Activated B cell treated with CpG ODN at 0.5 μM for 24 hours (primary cell): ENCODE measurements at regions of chr2 and their contacts with region 1.

Region 1: DNA sequence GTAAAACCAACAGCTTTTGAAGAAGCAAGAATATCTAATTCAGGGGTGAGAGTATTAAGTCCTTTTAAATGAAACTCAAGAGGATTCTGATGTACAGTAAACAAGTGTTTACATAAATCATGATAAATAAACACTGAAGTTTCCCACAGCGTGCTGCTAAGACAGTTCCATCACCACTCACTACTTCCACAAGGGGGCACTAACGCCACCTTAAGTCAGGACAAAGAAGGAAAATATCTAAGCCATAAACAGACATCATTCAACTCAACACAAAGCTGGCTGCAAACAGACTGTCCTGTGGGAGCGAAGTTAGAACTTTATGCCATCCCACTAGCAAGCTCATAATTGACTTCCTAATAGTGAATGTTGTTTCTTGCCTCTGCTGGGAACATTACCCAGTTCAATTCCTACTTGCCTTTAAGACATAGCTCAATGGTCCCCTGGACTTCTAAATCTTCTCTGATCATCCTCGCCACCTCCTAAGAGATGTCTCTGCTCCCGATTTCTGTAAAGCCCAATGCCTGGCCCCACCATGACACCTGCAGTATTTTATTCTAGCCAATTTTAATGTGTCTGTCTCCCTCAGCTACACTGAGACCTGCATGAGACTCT is 36.5 kb downstream of the MRPL44 start:
- DNase-seq: no peak
- ATAC-seq: peak; percentile 67
- H3K4me3 Mint-ChIP-seq: no peak overlapping the region
- H3K27ac Mint-ChIP-seq: no peak overlapping the region
- H3K4me1 Mint-ChIP-seq: no peaks in the 10 kb centered on the region
- H3K27me3 Mint-ChIP-seq: no peaks in the 10 kb centered on the region
- CTCF ChIP-seq: no peak

Region 2: GRCh38 chr2:222969491-222969890 is 1024.2 kb before region 1 on chr2:
- CTCF ChIA-PET with region 1: no interaction called
- POLR2A ChIA-PET with region 1: no interaction called
- intact Hi-C with region 1: loop called (anchors 5 kb)
- DNase-seq: no peak
- ATAC-seq: no peak
- H3K4me3 Mint-ChIP-seq: no peak overlapping the region
- H3K27ac Mint-ChIP-seq: no peak overlapping the region
- H3K4me1 Mint-ChIP-seq: no peaks in the 10 kb centered on the region
- H3K27me3 Mint-ChIP-seq: peaks cover 5% of the 10 kb centered on the region
- CTCF ChIP-seq: no peak

Region 3: GRCh38 chr2:223727562-223727961 is 266.2 kb before region 1 on chr2:
- CTCF ChIA-PET with region 1: no interaction called
- POLR2A ChIA-PET with region 1: no interaction called
- intact Hi-C with region 1: no loop called
- DNase-seq: no peak
- ATAC-seq: peak; percentile 65
- H3K4me3 Mint-ChIP-seq: no peak overlapping the region
- H3K27ac Mint-ChIP-seq: no peak overlapping the region
- H3K4me1 Mint-ChIP-seq: no peaks in the 10 kb centered on the region
- H3K27me3 Mint-ChIP-seq: no peaks in the 10 kb centered on the region
- CTCF ChIP-seq: peak; percentile 20

Region 4: DNA sequence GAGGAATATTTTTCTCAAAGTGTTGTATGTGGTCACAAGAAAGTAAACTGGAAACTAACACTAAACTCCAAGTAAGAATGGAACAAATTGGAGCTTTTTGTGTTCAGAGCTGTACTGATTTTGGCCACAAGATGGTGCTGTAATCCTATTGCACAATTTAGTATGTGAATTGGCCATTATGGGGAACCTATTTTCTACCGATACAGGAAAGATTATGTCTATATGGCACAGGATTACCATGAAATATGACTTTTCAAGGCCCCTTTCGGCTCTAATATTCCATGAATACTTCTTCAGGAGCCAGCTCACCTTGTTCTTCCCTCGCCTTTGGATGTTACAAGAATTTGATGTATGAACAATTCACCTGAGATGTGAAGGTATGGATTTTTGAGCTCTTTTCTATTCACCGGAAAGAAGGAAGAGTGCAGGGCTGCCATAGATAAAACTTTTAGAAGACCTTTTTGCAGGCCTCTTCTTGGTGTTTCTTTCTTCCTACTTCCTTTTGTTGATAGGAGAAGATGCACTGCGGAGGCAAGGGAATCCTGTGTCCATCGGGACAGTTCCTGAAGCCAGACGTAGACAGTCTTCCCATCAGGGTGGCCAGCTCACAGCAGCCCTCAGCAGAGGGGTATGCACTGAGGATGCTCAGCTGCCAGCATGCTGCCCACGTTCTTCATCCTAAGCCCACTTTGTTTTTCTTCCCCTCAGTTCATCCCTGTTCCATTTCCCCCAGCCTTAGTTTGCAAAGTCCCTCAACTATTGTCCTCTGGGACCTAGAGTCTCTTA is 23.2 kb before region 1 on chr2:
- CTCF ChIA-PET with region 1: interaction called, 41 read pairs
- POLR2A ChIA-PET with region 1: no interaction called
- intact Hi-C with region 1: loop called (anchors 1 kb)
- DNase-seq: no peak
- ATAC-seq: peak; percentile 64
- H3K4me3 Mint-ChIP-seq: no peak overlapping the region
- H3K27ac Mint-ChIP-seq: no peak overlapping the region
- H3K4me1 Mint-ChIP-seq: peaks cover 3% of the 10 kb centered on the region
- H3K27me3 Mint-ChIP-seq: no peaks in the 10 kb centered on the region
- CTCF ChIP-seq: peak; percentile 90

Region 5: GRCh38 chr2:224062481-224063297 is 69.0 kb after region 1 on chr2:
- CTCF ChIA-PET with region 1: interaction called, 12 read pairs
- POLR2A ChIA-PET with region 1: no interaction called
- intact Hi-C with region 1: loop called (anchors 1 kb)
- DNase-seq: no peak
- ATAC-seq: no peak
- H3K4me3 Mint-ChIP-seq: no peak overlapping the region
- H3K27ac Mint-ChIP-seq: no peak overlapping the region
- H3K4me1 Mint-ChIP-seq: peaks cover 2% of the 10 kb centered on the region
- H3K27me3 Mint-ChIP-seq: no peaks in the 10 kb centered on the region
- CTCF ChIP-seq: no peak

Region 6: GRCh38 chr2:224369028-224369632 is 375.4 kb after region 1 on chr2:
- CTCF ChIA-PET with region 1: no interaction called
- POLR2A ChIA-PET with region 1: no interaction called
- intact Hi-C with region 1: loop called (anchors 1 kb)
- DNase-seq: no peak
- ATAC-seq: no peak
- H3K4me3 Mint-ChIP-seq: no peak overlapping the region
- H3K27ac Mint-ChIP-seq: no peak overlapping the region
- H3K4me1 Mint-ChIP-seq: no peaks in the 10 kb centered on the region
- H3K27me3 Mint-ChIP-seq: no peaks in the 10 kb centered on the region
- CTCF ChIP-seq: peak; percentile 48

Region 7: GRCh38 chr2:224778474-224778877 is 784.7 kb after region 1 on chr2:
- CTCF ChIA-PET with region 1: no interaction called
- POLR2A ChIA-PET with region 1: no interaction called
- intact Hi-C with region 1: loop called (anchors 10 kb)
- DNase-seq: no peak
- ATAC-seq: peak; percentile 69
- H3K4me3 Mint-ChIP-seq: no peak overlapping the region
- H3K27ac Mint-ChIP-seq: no peak overlapping the region
- H3K4me1 Mint-ChIP-seq: no peaks in the 10 kb centered on the region
- H3K27me3 Mint-ChIP-seq: no peaks in the 10 kb centered on the region
- CTCF ChIP-seq: peak; percentile 70

Region 8: GRCh38 chr2:225556461-225556860 is 1562.7 kb after region 1 on chr2:
- CTCF ChIA-PET with region 1: no interaction called
- POLR2A ChIA-PET with region 1: no interaction called
- intact Hi-C with region 1: no loop called
- DNase-seq: no peak
- ATAC-seq: no peak
- H3K4me3 Mint-ChIP-seq: no peak overlapping the region
- H3K27ac Mint-ChIP-seq: no peak overlapping the region
- H3K4me1 Mint-ChIP-seq: no peaks in the 10 kb centered on the region
- H3K27me3 Mint-ChIP-seq: peaks cover 2% of the 10 kb centered on the region
- CTCF ChIP-seq: no peak